GM23248 (cell line): ENCODE measurements at regions of chr2 and their contacts with region 1.

Region 1: GRCh38 chr2:191150600-191151330 is at the start of gene STAT4:
- DNase-seq: peak; percentile 66
- H3K4me3 ChIP-seq: peak within 1 kb of the TSS; percentile 82
- H3K27ac ChIP-seq: no peak within 1 kb of the TSS
- H3K4me1 ChIP-seq: peaks cover 10% of the 10 kb centered on the region
- H3K27me3 ChIP-seq: no peaks in the 10 kb centered on the region
- total RNA-seq, gene STAT4: 1.5 and 3.2 TPM in 2 replicates

Region 2: GRCh38 chr2:190835303-190835930 is 315.3 kb before region 1 on chr2:
- in situ Hi-C with region 1: no loop called
- DNase-seq: peak; percentile 94
- H3K4me3 ChIP-seq: peak overlapping the region; percentile 0; the same call in 1 of the 2 replicates
- H3K27ac ChIP-seq: peak overlapping the region; percentile 30
- H3K4me1 ChIP-seq: peaks cover 58% of the 10 kb centered on the region
- H3K27me3 ChIP-seq: no peaks in the 10 kb centered on the region

Region 3: GRCh38 chr2:191051825-191052778 is 98.7 kb before region 1 on chr2:
- in situ Hi-C with region 1: loop called (anchors 10 kb)
- DNase-seq: peak; percentile 80
- H3K4me3 ChIP-seq: no peak overlapping the region
- H3K27ac ChIP-seq: peak overlapping the region; percentile 95
- H3K4me1 ChIP-seq: peaks cover 54% of the 10 kb centered on the region
- H3K27me3 ChIP-seq: no peaks in the 10 kb centered on the region

Region 4: DNA sequence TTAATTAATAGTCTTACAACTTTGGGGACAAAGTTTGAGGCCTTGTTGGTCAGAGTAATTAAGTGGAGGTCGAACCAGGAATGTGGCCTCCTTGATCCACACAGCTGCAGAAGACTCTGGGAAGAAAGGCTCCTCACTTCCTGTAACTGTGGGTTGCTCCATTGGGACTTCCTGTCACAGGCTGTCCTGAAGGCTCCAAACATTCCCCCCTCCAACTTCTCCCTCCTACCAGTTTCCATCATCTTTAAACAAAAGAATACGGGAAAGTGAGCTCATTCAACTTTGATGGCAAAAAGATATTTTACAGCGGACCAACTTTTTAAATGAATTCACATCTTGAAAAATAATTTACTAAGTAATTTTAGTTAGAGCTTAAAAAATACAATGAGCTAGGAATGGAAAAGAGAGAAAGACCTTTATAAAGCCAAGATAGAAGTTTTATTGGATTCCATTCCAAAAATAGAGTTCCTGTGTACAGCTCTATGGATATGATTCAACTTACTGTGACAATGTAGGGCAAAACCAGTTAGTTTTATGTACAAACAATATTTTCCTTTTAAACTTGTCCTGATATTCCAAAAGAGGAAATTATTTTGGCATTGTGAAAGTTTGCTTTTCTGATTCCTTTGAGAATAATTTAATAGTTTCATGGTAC is 315.1 kb after region 1 on chr2:
- in situ Hi-C with region 1: no loop called
- DNase-seq: peak; percentile 37
- H3K4me3 ChIP-seq: no peak overlapping the region
- H3K27ac ChIP-seq: no peak overlapping the region; the same call in 1 of the 2 replicates
- H3K4me1 ChIP-seq: peaks cover 13% of the 10 kb centered on the region
- H3K27me3 ChIP-seq: no peaks in the 10 kb centered on the region